ENCODE measurements at regions of chr9 and their contacts with region 1.

Region 1: DNA sequence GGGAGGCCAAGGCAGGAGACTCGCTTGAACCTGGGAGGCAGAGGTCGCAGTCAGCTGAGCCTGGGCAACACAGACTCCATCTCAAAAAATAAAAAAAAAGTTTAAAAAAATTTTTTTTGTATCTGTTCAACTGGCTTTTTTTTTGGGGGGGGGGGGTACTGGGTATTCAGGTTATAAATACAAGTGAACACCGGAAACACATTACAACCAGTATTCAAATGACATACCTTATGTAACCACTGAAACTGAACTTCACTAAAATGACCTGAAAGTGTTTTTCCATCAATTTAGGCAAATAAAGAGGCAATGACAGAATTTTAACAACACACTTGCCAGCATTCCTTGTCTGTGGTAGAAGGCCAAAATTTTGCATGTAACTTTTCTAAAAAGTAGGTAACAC is 33.5 kb downstream of the STRBP start:
- DNase-seq: peak; percentile 75
- ATAC-seq: peak; percentile 63
- H3K4me3 ChIP-seq: peak overlapping the region in 3 of 5 experiments; percentile 8 to 51 (median 23)
- H3K4me3 Mint-ChIP-seq: peak overlapping the region; percentile 75
- H3K27ac ChIP-seq: peak overlapping the region; percentile 85 to 90
- H3K27ac Mint-ChIP-seq: peak overlapping the region; percentile 90
- H3K4me1 ChIP-seq: peaks cover 75 to 82% of the 10 kb centered on the region in 2 donors
- H3K4me1 Mint-ChIP-seq: peaks cover 68% of the 10 kb centered on the region
- H3K27me3 ChIP-seq: no peaks in the 10 kb centered on the region
- H3K27me3 Mint-ChIP-seq: no peaks in the 10 kb centered on the region
- CTCF ChIP-seq: no peak

Region 2: DNA sequence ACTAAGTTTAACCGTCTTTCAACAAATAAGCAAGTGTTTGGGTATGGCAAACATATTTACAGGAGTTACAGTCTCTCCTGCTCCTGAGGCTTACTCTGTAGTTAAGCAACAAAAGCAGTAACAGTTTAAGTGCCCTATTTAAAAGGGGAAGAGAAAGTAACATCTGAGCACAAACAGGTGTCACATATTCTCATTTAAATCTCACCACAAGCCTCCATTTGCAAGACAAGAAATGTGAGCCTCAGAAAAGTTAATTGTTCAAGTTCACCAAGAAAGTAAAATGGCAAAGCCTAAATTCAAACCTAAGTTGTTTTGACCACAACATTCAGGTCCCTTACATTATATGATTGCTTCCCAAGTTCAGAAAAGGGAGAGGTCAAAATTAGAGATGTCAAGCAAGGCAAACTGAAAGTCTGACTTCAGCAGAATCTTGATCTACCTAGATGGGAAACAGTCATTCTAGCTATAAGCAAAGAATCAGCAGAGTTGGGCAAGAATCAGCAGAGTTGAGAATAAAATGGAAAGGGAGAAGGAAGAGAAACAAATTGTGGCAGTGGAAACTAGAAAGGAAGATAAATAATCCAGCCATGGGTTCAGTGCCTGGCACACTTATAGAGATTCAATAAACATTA is 59.9 kb before region 1 on chr9:
- CTCF ChIA-PET with region 1: interaction called, 3 read pairs
- POLR2A ChIA-PET with region 1: interaction called, 5 read pairs
- intact Hi-C with region 1: loop called (anchors 2 kb)
- DNase-seq: peak; percentile 83
- ATAC-seq: peak; percentile 91
- H3K4me3 ChIP-seq: peak overlapping the region in 1 of 5 experiments; percentile 53
- H3K4me3 Mint-ChIP-seq: peak overlapping the region; percentile 76
- H3K27ac ChIP-seq: peak overlapping the region; percentile 85 to 96
- H3K27ac Mint-ChIP-seq: peak overlapping the region; percentile 93
- H3K4me1 ChIP-seq: peaks cover 50 to 54% of the 10 kb centered on the region in 2 donors
- H3K4me1 Mint-ChIP-seq: peaks cover 74% of the 10 kb centered on the region
- H3K27me3 ChIP-seq: no peaks in the 10 kb centered on the region
- H3K27me3 Mint-ChIP-seq: no peaks in the 10 kb centered on the region
- CTCF ChIP-seq: no peak

Region 3: GRCh38 chr9:123251741-123252140 is 16.9 kb after region 1 on chr9:
- CTCF ChIA-PET with region 1: interaction called, 11 read pairs
- POLR2A ChIA-PET with region 1: no interaction called
- intact Hi-C with region 1: loop called (anchors 2 kb)
- DNase-seq: no peak
- ATAC-seq: no peak
- H3K4me3 ChIP-seq: no peak overlapping the region
- H3K4me3 Mint-ChIP-seq: peak overlapping the region; percentile 35
- H3K27ac ChIP-seq: peak overlapping the region in 1 of 2 donors; percentile 50
- H3K27ac Mint-ChIP-seq: no peak overlapping the region
- H3K4me1 ChIP-seq: peaks cover 30 to 46% of the 10 kb centered on the region in 2 donors
- H3K4me1 Mint-ChIP-seq: peaks cover 82% of the 10 kb centered on the region
- H3K27me3 ChIP-seq: no peaks in the 10 kb centered on the region
- H3K27me3 Mint-ChIP-seq: no peaks in the 10 kb centered on the region
- CTCF ChIP-seq: no peak

Region 4: DNA sequence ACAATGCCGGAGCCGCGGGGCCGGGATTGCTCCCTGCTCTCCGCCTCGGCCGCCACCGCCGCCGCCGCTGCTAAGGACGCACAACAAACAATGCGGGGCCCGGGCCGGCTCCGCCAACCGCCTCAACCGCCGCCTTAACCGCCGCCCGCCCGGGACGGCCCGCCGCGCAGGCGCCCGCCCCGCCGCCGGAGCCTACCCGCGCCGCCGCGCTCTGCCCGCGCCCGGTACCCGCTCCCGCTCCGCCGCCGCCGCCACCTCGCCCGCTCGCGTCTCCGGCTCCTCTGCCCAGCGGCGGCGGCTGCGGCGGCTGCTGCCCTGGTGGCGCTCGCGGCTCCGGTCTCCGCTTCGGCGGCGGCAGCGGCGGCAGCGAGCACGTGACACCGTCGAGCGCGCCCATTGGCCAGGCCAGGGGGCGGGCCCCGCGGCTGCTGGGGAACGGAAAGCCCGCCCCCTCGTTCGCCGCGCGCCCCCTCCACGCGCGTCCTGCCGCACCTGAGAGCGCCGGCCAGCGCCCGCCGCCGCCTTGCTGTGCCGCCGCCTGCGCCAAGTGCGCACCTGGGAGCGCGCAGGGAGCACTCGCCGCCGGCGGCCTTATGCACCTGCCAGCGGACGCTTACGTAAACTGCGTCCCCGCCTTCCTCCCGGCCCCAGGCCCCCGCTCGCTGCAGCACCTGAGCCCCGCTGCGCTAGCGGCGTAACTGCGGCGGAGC is 33.5 kb after region 1 on chr9 and contains the start of gene STRBP:
- CTCF ChIA-PET with region 1: interaction called, 5 read pairs
- POLR2A ChIA-PET with region 1: interaction called, 5 read pairs
- intact Hi-C with region 1: loop called (anchors 1 kb)
- DNase-seq: peak; percentile 99
- ATAC-seq: peak; percentile 91
- H3K4me3 ChIP-seq: peak within 1 kb of the TSS; percentile 55 to 95 (median 79)
- H3K4me3 Mint-ChIP-seq: peak within 1 kb of the TSS; percentile 91
- H3K27ac ChIP-seq: peak within 1 kb of the TSS; percentile 84 to 93
- H3K27ac Mint-ChIP-seq: peak within 1 kb of the TSS; percentile 89
- H3K4me1 ChIP-seq: peaks cover 41 to 51% of the 10 kb centered on the region in 2 donors
- H3K4me1 Mint-ChIP-seq: peaks cover 46% of the 10 kb centered on the region
- H3K27me3 ChIP-seq: no peaks in the 10 kb centered on the region
- H3K27me3 Mint-ChIP-seq: no peaks in the 10 kb centered on the region
- CTCF ChIP-seq: no peak
- total RNA-seq, gene STRBP: 189 and 197 TPM in 2 replicates

Region 5: DNA sequence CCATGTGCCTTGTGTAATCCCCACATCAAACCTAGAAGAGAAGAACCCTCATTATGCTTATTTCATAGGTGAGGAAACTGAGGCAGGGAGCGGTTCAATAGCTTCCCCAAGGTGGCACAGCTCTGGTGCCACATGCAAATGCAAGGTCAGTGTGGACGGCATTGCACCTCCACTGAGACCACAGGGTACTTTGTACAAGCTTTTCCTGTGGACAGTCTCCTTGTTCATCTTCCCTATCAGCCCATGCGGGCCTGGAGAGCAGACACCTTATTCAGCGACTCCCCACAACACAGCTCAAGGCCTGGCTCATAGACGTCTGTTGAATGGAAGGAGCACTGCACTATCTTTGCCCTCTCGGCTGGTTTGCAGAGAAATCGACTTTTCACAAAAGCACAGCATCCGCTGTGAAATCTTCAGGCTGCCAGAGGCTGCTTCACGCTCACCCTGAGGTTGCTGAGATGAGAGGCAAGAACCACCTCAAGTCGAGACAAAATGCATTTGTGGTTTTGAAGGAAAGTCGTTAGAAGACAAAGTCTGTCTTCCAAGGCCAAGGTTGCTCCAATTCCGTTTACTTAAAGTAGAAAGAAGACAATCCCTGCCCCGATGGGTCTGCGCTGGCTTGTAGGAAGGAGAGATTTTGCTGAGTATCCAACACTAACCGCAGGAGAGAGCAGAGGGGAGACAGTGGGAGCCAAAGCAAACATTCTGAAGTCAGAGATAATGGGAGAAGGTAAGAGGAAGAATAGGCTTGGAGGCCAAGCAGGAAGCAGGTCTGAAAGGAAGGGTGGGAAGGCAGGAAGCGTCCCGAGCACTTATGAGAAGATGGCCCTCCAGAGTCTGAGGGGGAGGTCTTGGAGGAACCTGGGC is 67.7 kb after region 1 on chr9:
- CTCF ChIA-PET with region 1: no interaction called
- POLR2A ChIA-PET with region 1: interaction called, 12 read pairs
- intact Hi-C with region 1: no loop called
- DNase-seq: no peak
- ATAC-seq: no peak
- H3K4me3 ChIP-seq: no peak overlapping the region
- H3K4me3 Mint-ChIP-seq: no peak overlapping the region
- H3K27ac ChIP-seq: no peak overlapping the region
- H3K27ac Mint-ChIP-seq: no peak overlapping the region
- H3K4me1 ChIP-seq: peaks cover 17 to 20% of the 10 kb centered on the region in 2 donors
- H3K4me1 Mint-ChIP-seq: peaks cover 14% of the 10 kb centered on the region
- H3K27me3 ChIP-seq: no peaks in the 10 kb centered on the region
- H3K27me3 Mint-ChIP-seq: no peaks in the 10 kb centered on the region
- CTCF ChIP-seq: no peak

Measured in B cell (primary cell).